Natural killer cell (primary cell): ENCODE measurements at regions of chr13 and their contacts with region 1.

Region 1: DNA sequence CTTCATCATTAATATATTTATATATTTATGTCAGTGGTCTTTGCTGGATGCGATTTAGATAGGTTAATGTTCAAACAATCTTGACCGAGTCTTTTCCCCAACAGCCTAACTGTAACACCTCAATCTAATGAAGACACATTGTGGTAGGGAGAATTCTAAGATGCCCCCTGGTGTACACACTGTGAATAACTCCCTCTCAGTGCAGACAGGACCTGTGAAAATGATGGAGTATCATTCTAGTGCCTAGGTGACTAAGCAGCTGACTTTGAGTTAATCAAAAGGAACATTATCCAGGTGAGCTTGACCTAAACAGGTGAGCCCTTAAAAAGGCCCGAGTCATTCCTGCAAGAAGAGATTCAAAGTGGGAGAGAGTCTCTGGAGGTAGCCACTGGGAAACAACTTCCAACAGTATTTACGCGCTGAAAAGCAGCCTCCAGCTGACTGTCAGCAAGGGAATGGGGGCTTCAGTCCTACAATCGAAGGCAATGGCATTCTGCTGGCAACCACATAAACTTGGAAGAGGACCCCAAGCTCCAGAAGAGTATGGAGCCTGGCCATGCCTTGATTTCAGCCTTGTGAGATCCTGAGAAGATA is 28.0 kb upstream of the KBTBD7 start:
- DNase-seq: peak in 1 of 2 donors; percentile 77
- ATAC-seq: peak; percentile 91 to 98 (median 92)
- H3K4me3 ChIP-seq: no peak overlapping the region
- H3K4me3 Mint-ChIP-seq: no peak overlapping the region
- H3K27ac ChIP-seq: no peak overlapping the region
- H3K27ac Mint-ChIP-seq: no peak overlapping the region
- H3K4me1 ChIP-seq: no peaks in the 10 kb centered on the region
- H3K4me1 Mint-ChIP-seq: no peaks in the 10 kb centered on the region
- H3K27me3 ChIP-seq: no peaks in the 10 kb centered on the region
- H3K27me3 Mint-ChIP-seq: no peaks in the 10 kb centered on the region
- CTCF ChIP-seq: peak; percentile 77

Region 2: DNA sequence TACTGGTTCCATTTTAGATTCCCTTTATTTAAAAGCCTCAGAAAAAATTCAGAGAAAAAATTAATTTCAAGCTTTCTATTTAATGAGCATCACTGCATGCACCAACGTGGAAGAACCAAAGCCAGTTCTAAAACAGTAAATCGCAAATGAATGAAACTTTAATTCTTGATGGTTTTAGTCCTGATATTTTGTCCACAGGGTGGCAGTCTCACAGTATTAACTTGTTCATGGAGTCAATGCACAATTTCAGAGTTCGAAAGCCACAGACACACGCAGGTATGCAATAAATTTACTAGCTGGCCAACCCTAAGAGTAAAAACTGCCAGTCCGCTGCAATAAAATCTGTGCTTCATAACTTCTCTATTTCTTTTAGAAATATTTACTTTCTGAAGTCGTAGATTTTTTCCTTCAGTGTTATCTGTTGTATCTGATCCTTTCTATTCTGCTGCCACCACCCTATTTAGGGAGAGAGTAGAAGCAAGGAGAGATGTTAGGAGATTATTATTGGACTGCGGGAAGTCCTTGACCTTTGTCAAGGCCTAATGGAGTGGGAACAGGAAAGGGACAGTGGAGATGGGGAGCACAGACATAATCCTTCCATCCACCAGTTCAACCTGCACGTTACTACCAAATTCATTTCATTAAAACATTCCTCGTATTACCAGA is 168.0 kb before region 1 on chr13:
- intact Hi-C with region 1: loop called (anchors 1 kb)
- DNase-seq: peak in 1 of 2 donors; percentile 82
- ATAC-seq: peak; percentile 71 to 76 (median 75)
- H3K4me3 ChIP-seq: no peak overlapping the region
- H3K4me3 Mint-ChIP-seq: no peak overlapping the region
- H3K27ac ChIP-seq: no peak overlapping the region
- H3K27ac Mint-ChIP-seq: no peak overlapping the region
- H3K4me1 ChIP-seq: peaks cover 3% of the 10 kb centered on the region
- H3K4me1 Mint-ChIP-seq: peaks cover 16 to 40% of the 10 kb centered on the region in 2 donors
- H3K27me3 ChIP-seq: no peaks in the 10 kb centered on the region
- H3K27me3 Mint-ChIP-seq: no peaks in the 10 kb centered on the region
- CTCF ChIP-seq: peak; percentile 67

Region 3: GRCh38 chr13:41075034-41075433 is 147.3 kb before region 1 on chr13:
- intact Hi-C with region 1: loop called (anchors 1 kb)
- DNase-seq: peak in 1 of 2 donors; percentile 76
- ATAC-seq: peak in 2 of 3 donors; percentile 55 to 58
- H3K4me3 ChIP-seq: no peak overlapping the region
- H3K4me3 Mint-ChIP-seq: no peak overlapping the region
- H3K27ac ChIP-seq: no peak overlapping the region
- H3K27ac Mint-ChIP-seq: no peak overlapping the region
- H3K4me1 ChIP-seq: no peaks in the 10 kb centered on the region
- H3K4me1 Mint-ChIP-seq: no peaks in the 10 kb centered on the region
- H3K27me3 ChIP-seq: no peaks in the 10 kb centered on the region
- H3K27me3 Mint-ChIP-seq: no peaks in the 10 kb centered on the region
- CTCF ChIP-seq: peak; percentile 53